ENCODE measurements at regions of chr7 and their contacts with region 1.

Region 1: DNA sequence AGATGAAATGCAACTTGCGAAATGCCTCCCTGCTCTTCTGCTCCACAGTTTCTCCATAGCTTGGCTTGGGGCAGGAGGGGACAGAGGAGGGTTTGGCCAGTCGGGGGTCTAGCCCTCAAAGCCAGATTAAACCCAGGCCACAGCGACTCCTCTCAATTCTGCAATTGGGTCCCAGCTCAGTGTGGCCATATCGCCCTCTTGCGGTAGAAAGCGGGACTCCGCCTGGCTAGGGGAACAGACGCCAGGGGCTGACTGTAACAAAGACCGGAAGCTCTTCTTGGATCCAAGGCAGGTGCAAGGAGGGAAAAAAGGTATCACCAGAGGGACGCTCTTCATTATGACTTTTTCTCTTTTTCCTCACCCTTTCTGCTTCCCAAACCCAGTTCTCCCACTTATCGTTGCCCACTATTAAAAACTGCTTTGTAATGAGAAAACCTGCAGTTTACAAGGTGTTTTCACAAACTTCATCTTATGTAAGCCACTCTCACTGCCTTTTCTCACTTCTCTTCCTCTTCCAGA is 36.6 kb upstream of the TNPO3 start:
- DNase-seq: peak; percentile 76
- H3K27ac ChIP-seq: no peak overlapping the region
- CTCF ChIP-seq: peak; percentile 100

Region 2: DNA sequence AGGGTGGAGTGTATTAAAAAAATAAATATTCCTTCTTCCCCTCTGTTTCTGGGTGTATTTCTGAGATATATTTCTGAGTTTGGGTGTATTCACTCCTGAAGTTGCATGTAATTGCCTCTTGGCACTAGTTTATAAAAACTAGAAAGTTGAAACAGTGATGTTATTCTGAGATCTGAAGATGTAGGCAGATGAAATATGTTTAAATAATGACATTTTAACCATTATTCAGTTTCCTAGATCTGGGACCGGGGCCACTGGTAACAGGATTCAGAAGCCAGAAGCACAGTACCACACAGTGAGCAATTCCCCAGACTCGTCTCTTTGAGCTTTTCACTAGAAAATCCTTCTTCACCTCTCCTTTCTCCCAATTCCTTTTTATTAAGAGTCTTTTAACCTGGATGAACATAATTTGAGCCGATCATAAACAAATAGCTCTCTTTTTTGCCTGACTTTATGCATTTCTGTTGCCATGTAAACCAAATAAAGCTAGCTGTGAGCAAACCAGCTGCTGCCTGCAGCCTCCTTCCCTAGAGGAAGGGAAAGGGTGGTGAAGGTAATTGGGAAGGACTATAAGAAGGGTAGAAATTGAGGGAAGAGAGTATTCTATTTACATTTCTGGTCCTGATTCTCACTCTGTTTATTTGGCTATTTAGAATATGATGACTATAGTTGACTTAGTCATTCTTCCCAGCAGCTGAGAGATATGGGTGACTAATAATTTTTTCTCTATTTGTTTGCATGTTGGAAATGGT is 240.9 kb after region 1 on chr7:
- CTCF ChIA-PET with region 1: no interaction called
- POLR2A ChIA-PET with region 1: no interaction called
- DNase-seq: peak; percentile 36
- H3K27ac ChIP-seq: no peak overlapping the region
- CTCF ChIP-seq: no peak

Region 3: GRCh38 chr7:129438839-129439651 is 347.5 kb after region 1 on chr7:
- CTCF ChIA-PET with region 1: interaction called, 13 read pairs
- POLR2A ChIA-PET with region 1: no interaction called
- DNase-seq: peak; percentile 69
- H3K27ac ChIP-seq: no peak overlapping the region
- CTCF ChIP-seq: no peak